ENCODE measurements at regions of chr19 and their contacts with region 1.

Region 1: GRCh38 chr19:3618144-3618810 is 8.3 kb downstream of the CACTIN start:
- DNase-seq: peak in 4 of 5 donors; percentile 24 to 44 (median 30)
- H3K4me3 ChIP-seq: no peak overlapping the region
- H3K4me3 Mint-ChIP-seq: no peak overlapping the region
- H3K27ac ChIP-seq: no peak overlapping the region
- H3K27ac Mint-ChIP-seq: no peak overlapping the region
- H3K4me1 ChIP-seq: no peaks in the 10 kb centered on the region
- H3K4me1 Mint-ChIP-seq: peaks cover 0 to 9% (median 2%) of the 10 kb centered on the region in 4 donors
- H3K27me3 ChIP-seq: no peaks in the 10 kb centered on the region
- H3K27me3 Mint-ChIP-seq: no peaks in the 10 kb centered on the region

Region 2: GRCh38 chr19:3586124-3586626 is 32.1 kb before region 1 on chr19:
- CTCF ChIA-PET with region 1: interaction called, 10 read pairs
- POLR2A ChIA-PET with region 1: no interaction called
- intact Hi-C with region 1: no loop called
- DNase-seq: peak in 3 of 5 donors; percentile 21 to 33 (median 29)
- H3K4me3 ChIP-seq: peak overlapping the region in 1 of 2 donors; percentile 38
- H3K4me3 Mint-ChIP-seq: peak overlapping the region in 6 of 8 donors; percentile 29 to 59 (median 46)
- H3K27ac ChIP-seq: no peak overlapping the region
- H3K27ac Mint-ChIP-seq: peak overlapping the region in 1 of 7 donors; percentile 43
- H3K4me1 ChIP-seq: peaks cover 6% of the 10 kb centered on the region
- H3K4me1 Mint-ChIP-seq: no peaks in the 10 kb centered on the region
- H3K27me3 ChIP-seq: no peaks in the 10 kb centered on the region
- H3K27me3 Mint-ChIP-seq: no peaks in the 10 kb centered on the region

Measured in CD4-positive, alpha-beta memory T cell (primary cell).